ENCODE measurements at regions of chr6 and their contacts with region 1.

Region 1: GRCh38 chr6:155755452-155755851 is 299.8 kb upstream of the NOX3 start:
- DNase-seq: no peak
- H3K4me3 ChIP-seq: no peak overlapping the region
- H3K27ac ChIP-seq: no peak overlapping the region
- H3K4me1 ChIP-seq: no peaks in the 10 kb centered on the region
- H3K27me3 ChIP-seq: no peaks in the 10 kb centered on the region
- CTCF ChIP-seq: no peak

Region 2: DNA sequence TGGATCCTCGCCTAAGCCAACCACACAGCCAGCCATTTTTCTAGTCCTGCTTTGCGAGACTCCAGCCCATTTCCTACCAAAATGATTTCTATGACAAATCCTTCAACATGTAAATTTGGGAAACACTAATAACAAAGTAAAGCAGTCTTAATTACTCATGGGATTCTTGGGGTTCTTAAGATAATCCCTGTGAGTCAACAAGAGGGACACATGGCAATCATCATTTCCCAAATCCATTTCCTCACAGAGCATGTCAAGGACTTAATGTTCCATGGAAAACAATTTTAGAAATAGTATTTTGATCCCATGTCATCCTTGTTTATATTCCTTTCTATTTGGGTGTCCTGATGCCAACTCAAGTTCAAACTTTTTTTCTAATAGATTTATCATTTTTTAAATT is 22.9 kb after region 1 on chr6:
- CTCF ChIA-PET with region 1: interaction called, 22 read pairs
- dilution Hi-C with region 1: no loop called
- in situ Hi-C with region 1: no loop called
- intact Hi-C with region 1: no loop called
- DNase-seq: no peak
- H3K4me3 ChIP-seq: no peak overlapping the region
- H3K27ac ChIP-seq: no peak overlapping the region
- H3K4me1 ChIP-seq: peaks cover 18% of the 10 kb centered on the region
- H3K27me3 ChIP-seq: no peaks in the 10 kb centered on the region
- CTCF ChIP-seq: no peak